ENCODE measurements at regions of chr16 and their contacts with region 1.

Region 1: GRCh38 chr16:66516808-66517585 is 32.9 kb downstream of the TK2 start:
- DNase-seq: peak in 6 of 9 donors; percentile 36 to 80 (median 44)
- ATAC-seq: peak; percentile 92
- H3K4me3 ChIP-seq: peak overlapping the region; percentile 22
- H3K4me3 Mint-ChIP-seq: peak overlapping the region; percentile 23 to 88 (median 72)
- H3K27ac ChIP-seq: peak overlapping the region; percentile 58
- H3K27ac Mint-ChIP-seq: peak overlapping the region; percentile 67 to 99 (median 89)
- H3K4me1 ChIP-seq: peaks cover 54 to 61% of the 10 kb centered on the region in 2 donors
- H3K4me1 Mint-ChIP-seq: peaks cover 60 to 79% (median 71%) of the 10 kb centered on the region in 7 donors
- H3K27me3 ChIP-seq: no peaks in the 10 kb centered on the region
- H3K27me3 Mint-ChIP-seq: no peaks in the 10 kb centered on the region

Region 2: DNA sequence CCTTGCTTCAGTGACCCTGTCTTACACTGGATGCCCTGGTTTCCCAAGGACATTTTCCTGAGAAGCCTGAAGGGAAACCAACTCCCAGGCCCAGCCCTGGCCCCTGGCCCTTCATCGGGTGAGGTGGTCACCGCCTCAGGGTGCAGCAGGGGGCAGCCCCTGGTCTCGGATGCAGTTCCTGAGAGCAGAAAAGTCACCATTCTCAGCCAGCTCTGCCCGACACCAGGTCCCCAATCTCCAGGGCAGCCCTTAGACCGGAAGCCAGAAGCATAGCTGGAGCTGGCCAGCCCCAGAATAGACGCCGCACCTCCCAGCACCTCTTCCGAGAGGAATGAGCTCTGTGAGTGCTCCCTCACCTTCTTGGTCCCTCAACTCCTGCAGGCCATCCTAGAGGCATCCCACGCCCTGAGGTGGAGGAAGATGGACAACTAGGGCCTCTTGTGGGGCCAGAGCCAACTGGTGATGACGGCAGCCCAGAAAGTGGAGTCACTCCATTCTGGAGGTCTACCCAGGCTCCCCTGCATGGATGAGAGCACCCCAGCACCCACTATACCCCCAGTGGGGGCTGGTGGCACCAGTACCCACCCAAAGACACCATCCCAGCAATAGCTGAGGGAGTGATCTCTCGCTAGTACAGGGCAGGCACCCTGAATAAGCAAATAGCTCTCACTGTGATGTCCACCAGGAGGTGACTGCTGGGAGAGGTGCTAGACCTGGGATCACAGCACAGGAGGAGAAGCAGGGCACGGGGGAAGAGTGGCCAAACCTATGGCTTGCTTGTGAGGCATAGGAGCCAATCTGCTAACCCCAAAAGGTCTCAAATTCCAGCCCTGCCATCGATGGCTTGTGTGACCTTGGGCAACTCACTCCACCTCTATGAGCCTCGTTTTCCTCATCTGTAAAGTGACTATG is 23.3 kb before region 1 on chr16:
- CTCF ChIA-PET with region 1: no interaction called
- POLR2A ChIA-PET with region 1: no interaction called
- intact Hi-C with region 1: no loop called
- DNase-seq: no peak
- ATAC-seq: no peak
- H3K4me3 ChIP-seq: no peak overlapping the region
- H3K4me3 Mint-ChIP-seq: no peak overlapping the region
- H3K27ac ChIP-seq: no peak overlapping the region
- H3K27ac Mint-ChIP-seq: no peak overlapping the region
- H3K4me1 ChIP-seq: no peaks in the 10 kb centered on the region
- H3K4me1 Mint-ChIP-seq: peaks cover 0 to 6% (median 0%) of the 10 kb centered on the region in 7 donors
- H3K27me3 ChIP-seq: no peaks in the 10 kb centered on the region
- H3K27me3 Mint-ChIP-seq: peaks cover 0 to 7% (median 0%) of the 10 kb centered on the region in 5 donors

Region 3: GRCh38 chr16:66596986-66597848 is 80.2 kb after region 1 on chr16:
- CTCF ChIA-PET with region 1: no interaction called
- POLR2A ChIA-PET with region 1: no interaction called
- intact Hi-C with region 1: loop called in 1 of 2 experiments (anchors 2 kb)
- DNase-seq: no peak
- ATAC-seq: no peak
- H3K4me3 ChIP-seq: no peak overlapping the region
- H3K4me3 Mint-ChIP-seq: peak overlapping the region in 4 of 10 donors; percentile 6 to 68 (median 24)
- H3K27ac ChIP-seq: peak overlapping the region; percentile 25
- H3K27ac Mint-ChIP-seq: peak overlapping the region in 8 of 9 donors; percentile 1 to 86 (median 69)
- H3K4me1 ChIP-seq: peaks cover 0 to 22% of the 10 kb centered on the region in 2 donors
- H3K4me1 Mint-ChIP-seq: peaks cover 16 to 47% (median 34%) of the 10 kb centered on the region in 7 donors
- H3K27me3 ChIP-seq: no peaks in the 10 kb centered on the region
- H3K27me3 Mint-ChIP-seq: no peaks in the 10 kb centered on the region

Measured in naive thymus-derived CD4-positive, alpha-beta T cell (primary cell).